Activated CD8-positive, alpha-beta T cell treated with anti-CD3 and anti-CD28 coated beads for 36 hours (primary cell): ENCODE measurements at regions of chr11 and their contacts with region 1.

Region 1: GRCh38 chr11:65615229-65615941 is at the start of gene PCNX3:
- DNase-seq: peak; percentile 100
- ATAC-seq: peak; percentile 90
- H3K4me3 Mint-ChIP-seq: peak within 1 kb of the TSS; percentile 93
- H3K27ac Mint-ChIP-seq: peak within 1 kb of the TSS; percentile 97
- H3K4me1 Mint-ChIP-seq: peaks cover 45% of the 10 kb centered on the region
- H3K27me3 Mint-ChIP-seq: no peaks in the 10 kb centered on the region
- CTCF ChIP-seq: no peak
- total RNA-seq, gene PCNX3: 34.3 to 34.4 TPM

Region 2: GRCh38 chr11:65551572-65552398 is 63.6 kb before region 1 on chr11:
- CTCF ChIA-PET with region 1: no interaction called
- POLR2A ChIA-PET with region 1: no interaction called
- intact Hi-C with region 1: no loop called
- DNase-seq: peak; percentile 77
- ATAC-seq: peak; percentile 38
- H3K4me3 Mint-ChIP-seq: no peak overlapping the region
- H3K27ac Mint-ChIP-seq: peak overlapping the region; percentile 14
- H3K4me1 Mint-ChIP-seq: peaks cover 73% of the 10 kb centered on the region
- H3K27me3 Mint-ChIP-seq: no peaks in the 10 kb centered on the region
- CTCF ChIP-seq: peak; percentile 61

Region 3: GRCh38 chr11:65588199-65589054 is 27.0 kb before region 1 on chr11:
- CTCF ChIA-PET with region 1: interaction called, 47 read pairs
- POLR2A ChIA-PET with region 1: interaction called, 30 read pairs
- intact Hi-C with region 1: no loop called
- DNase-seq: peak; percentile 93
- ATAC-seq: peak; percentile 76
- H3K4me3 Mint-ChIP-seq: peak overlapping the region; percentile 36
- H3K27ac Mint-ChIP-seq: peak overlapping the region; percentile 94
- H3K4me1 Mint-ChIP-seq: peaks cover 40% of the 10 kb centered on the region
- H3K27me3 Mint-ChIP-seq: no peaks in the 10 kb centered on the region
- CTCF ChIP-seq: peak; percentile 75

Region 4: DNA sequence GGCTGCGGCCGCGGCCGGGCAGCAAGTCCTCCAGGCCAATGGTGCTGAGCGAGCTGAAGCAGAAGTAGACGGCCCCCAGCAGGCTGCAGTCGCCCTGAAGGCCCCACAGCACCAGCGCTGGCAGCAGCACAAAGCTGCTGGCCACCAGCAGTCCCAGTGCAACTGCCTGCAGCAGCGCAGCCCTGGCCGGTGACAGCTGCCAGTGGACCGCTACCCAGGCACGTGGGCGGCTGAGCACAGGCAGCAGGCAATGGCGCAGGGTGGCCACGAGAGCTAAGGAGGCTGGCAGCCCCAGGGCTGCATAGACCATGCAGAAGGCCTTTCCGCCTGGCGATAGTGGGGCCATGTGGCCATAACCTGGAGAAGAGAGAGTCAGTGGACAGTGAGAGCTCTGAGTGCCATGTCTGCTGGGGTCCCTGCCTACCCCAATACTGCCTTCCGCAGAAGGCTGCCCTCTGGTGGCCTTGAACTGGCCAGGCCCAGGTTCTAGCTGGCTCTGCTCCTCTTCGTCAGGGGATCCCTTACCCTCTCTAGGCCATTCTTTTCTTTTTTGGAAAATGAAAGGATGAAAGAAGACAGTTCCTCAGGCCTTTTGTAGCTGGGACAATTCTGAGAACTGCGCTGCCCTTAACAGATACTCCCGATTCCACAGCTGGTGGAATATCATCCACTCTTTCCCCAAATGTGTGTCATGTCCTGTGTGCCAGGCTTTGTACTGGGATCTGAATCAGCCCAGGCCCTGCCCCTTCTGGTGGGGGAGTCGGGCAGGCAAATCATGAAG is 21.7 kb before region 1 on chr11:
- CTCF ChIA-PET with region 1: interaction called, 47 read pairs
- POLR2A ChIA-PET with region 1: interaction called, 30 read pairs
- intact Hi-C with region 1: no loop called
- DNase-seq: peak; percentile 73
- ATAC-seq: peak; percentile 24
- H3K4me3 Mint-ChIP-seq: no peak overlapping the region
- H3K27ac Mint-ChIP-seq: no peak overlapping the region
- H3K4me1 Mint-ChIP-seq: peaks cover 29% of the 10 kb centered on the region
- H3K27me3 Mint-ChIP-seq: no peaks in the 10 kb centered on the region
- CTCF ChIP-seq: peak; percentile 80

Region 5: GRCh38 chr11:65625628-65626342 is 10.4 kb after region 1 on chr11:
- CTCF ChIA-PET with region 1: interaction called, 12 read pairs
- POLR2A ChIA-PET with region 1: interaction called, 3 read pairs
- intact Hi-C with region 1: no loop called
- DNase-seq: peak; percentile 68
- ATAC-seq: peak; percentile 93
- H3K4me3 Mint-ChIP-seq: no peak overlapping the region
- H3K27ac Mint-ChIP-seq: no peak overlapping the region
- H3K4me1 Mint-ChIP-seq: peaks cover 3% of the 10 kb centered on the region
- H3K27me3 Mint-ChIP-seq: no peaks in the 10 kb centered on the region
- CTCF ChIP-seq: peak; percentile 69

Region 6: DNA sequence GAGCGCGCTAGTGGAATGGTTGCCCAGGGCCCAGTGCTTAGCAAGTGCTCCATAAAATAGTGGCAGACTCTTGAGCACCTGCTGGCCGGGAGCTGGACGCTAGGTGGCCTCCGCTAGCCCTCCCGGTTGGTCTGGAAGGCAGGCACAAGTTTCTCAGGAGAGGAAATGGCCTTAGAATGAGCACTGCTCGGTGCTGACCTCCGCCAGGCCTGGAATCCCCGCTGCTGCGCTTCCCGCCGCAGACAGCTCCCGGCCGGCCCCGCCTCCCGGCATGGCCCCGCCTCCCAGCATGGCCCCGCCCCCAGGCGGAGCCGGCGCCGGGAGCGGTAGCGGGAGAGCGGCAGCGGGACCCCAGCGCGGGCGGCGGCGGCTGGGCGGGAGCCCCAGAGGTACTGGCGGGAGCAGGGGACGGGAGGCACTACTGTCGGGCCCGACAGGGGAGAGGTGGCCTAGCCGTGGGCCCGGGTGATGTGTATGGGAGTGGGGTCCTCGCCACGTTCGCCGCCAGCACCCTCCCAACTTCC is 22.5 kb after region 1 on chr11 and contains the start of gene SIPA1:
- CTCF ChIA-PET with region 1: interaction called, 5 read pairs
- POLR2A ChIA-PET with region 1: interaction called, 39 read pairs
- intact Hi-C with region 1: no loop called
- DNase-seq: peak; percentile 75
- ATAC-seq: peak; percentile 63
- H3K4me3 Mint-ChIP-seq: peak within 1 kb of the TSS; percentile 77
- H3K27ac Mint-ChIP-seq: peak within 1 kb of the TSS; percentile 90
- H3K4me1 Mint-ChIP-seq: peaks cover 30% of the 10 kb centered on the region
- H3K27me3 Mint-ChIP-seq: no peaks in the 10 kb centered on the region
- CTCF ChIP-seq: no peak
- total RNA-seq, gene SIPA1: 172 to 180 TPM